Heart left ventricle (tissue), 16 donors: ENCODE measurements at regions of chr5 and their contacts with region 1.

Region 1: GRCh38 chr5:141870871-141871270 is 7.3 kb downstream of the PCDH1 start:
- DNase-seq: no peak
- ATAC-seq: peak in 2 of 4 donors; percentile 22 to 40
- H3K4me3 ChIP-seq: no peak overlapping the region
- H3K27ac ChIP-seq: peak overlapping the region in 5 of 12 donors; percentile 8 to 34 (median 13)
- H3K4me1 ChIP-seq: peaks cover 0 to 69% (median 27%) of the 10 kb centered on the region in 12 donors
- H3K27me3 ChIP-seq: peaks cover 0 to 30% (median 7%) of the 10 kb centered on the region in 9 donors
- CTCF ChIP-seq: no peak
- POLR2A ChIP-seq: no peak

Region 2: GRCh38 chr5:141821361-141821925 is 49.4 kb before region 1 on chr5:
- intact Hi-C with region 1: loop called in 5 of 10 experiments (anchors 5 to 10 kb)
- DNase-seq: no peak
- ATAC-seq: peak in 2 of 4 donors; percentile 17 to 23
- H3K4me3 ChIP-seq: no peak overlapping the region
- H3K27ac ChIP-seq: peak overlapping the region; percentile 43 to 78 (median 59)
- H3K4me1 ChIP-seq: peaks cover 0 to 41% (median 15%) of the 10 kb centered on the region in 12 donors
- H3K27me3 ChIP-seq: peaks cover 0 to 3% (median 0%) of the 10 kb centered on the region in 9 donors
- CTCF ChIP-seq: no peak
- POLR2A ChIP-seq: no peak

Region 3: DNA sequence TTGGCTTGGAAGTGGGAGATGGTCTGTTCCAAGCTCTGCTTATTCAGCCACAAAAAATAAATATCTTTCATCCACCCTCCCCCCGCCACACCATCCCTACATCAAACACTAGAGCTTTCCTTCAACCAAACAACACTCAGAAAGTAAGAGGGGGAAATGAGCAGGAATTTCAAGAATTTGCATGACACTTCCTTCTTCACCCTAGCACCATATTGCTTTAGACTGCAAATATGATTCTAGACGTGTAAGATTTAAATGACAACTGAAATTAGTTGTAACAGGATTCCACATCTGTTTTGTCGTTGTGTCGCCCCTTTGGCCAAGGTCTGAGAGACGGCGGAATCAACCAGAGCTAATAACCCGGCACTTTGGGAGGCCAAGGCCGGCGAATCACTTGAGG is 326.2 kb after region 1 on chr5:
- intact Hi-C with region 1: no loop called
- DNase-seq: no peak
- ATAC-seq: no peak
- H3K4me3 ChIP-seq: no peak overlapping the region
- H3K27ac ChIP-seq: no peak overlapping the region
- H3K4me1 ChIP-seq: peaks cover 0 to 14% (median 6%) of the 10 kb centered on the region in 12 donors
- H3K27me3 ChIP-seq: no peaks in the 10 kb centered on the region
- CTCF ChIP-seq: no peak
- POLR2A ChIP-seq: no peak